Dendritic cell treated with granulocyte-macrophage colony-stimulating factor and Interleukin-4, amounts not matched to agents 40 ng/mL and 50 ng/mL, for 4 days (primary cell): ENCODE measurements at regions of chr9 and their contacts with region 1.

Region 1: DNA sequence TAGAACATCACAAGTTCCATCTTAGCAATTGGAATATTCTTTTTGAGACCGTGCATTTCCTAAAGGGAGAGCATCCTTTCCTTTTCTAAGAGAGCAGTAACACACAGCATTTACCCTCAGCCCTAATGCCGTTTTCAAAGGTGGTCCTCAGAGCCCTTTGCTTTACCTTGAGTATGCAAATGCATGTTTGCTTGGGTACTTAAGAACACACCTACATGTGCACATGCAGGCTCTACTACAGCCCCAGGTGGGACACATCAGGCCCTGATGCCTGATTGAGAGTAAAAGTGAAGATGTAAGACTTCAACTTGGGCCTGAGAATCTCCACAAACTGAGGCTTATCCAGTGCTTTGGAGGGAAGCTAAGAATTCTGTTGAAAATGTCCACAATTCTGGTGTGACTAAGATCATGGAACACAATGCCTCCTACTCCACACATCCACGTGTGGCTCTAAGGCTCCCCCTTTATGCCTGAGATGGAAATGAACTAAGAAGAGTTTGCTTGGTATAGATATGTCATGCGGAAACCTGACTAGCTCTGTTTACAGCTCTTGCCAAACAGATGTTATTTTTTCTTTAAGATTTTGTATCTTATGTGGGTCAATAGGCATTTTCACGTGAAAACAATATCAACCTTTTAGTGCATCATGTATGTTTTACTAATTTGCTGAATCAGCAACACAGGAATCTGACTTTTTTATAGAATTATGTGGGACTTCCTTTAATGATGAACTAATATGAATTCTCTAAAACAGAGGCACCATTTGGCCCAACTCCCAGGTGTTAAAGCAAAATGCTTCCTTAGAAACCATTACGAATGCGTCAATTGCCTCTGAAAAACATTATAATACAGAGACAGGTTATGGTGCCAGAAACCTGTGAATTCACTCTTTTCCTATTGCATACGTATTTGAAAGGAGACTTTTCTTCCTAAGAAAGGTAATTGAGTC is 48.9 kb upstream of the SLC2A8 start:
- H3K4me3 Mint-ChIP-seq: no peak overlapping the region
- H3K27ac Mint-ChIP-seq: no peak overlapping the region
- H3K4me1 Mint-ChIP-seq: no peaks in the 10 kb centered on the region
- H3K27me3 Mint-ChIP-seq: no peaks in the 10 kb centered on the region

Region 2: GRCh38 chr9:125785248-125785751 is 1562.8 kb before region 1 on chr9:
- intact Hi-C with region 1: no loop called
- H3K4me3 Mint-ChIP-seq: peak overlapping the region; percentile 59
- H3K27ac Mint-ChIP-seq: peak overlapping the region; percentile 89
- H3K4me1 Mint-ChIP-seq: peaks cover 52% of the 10 kb centered on the region
- H3K27me3 Mint-ChIP-seq: no peaks in the 10 kb centered on the region

Region 3: GRCh38 chr9:126947529-126947928 is 400.6 kb before region 1 on chr9:
- intact Hi-C with region 1: loop called (anchors 10 kb)
- H3K4me3 Mint-ChIP-seq: no peak overlapping the region
- H3K27ac Mint-ChIP-seq: no peak overlapping the region
- H3K4me1 Mint-ChIP-seq: peaks cover 15% of the 10 kb centered on the region
- H3K27me3 Mint-ChIP-seq: peaks cover 35% of the 10 kb centered on the region

Region 4: DNA sequence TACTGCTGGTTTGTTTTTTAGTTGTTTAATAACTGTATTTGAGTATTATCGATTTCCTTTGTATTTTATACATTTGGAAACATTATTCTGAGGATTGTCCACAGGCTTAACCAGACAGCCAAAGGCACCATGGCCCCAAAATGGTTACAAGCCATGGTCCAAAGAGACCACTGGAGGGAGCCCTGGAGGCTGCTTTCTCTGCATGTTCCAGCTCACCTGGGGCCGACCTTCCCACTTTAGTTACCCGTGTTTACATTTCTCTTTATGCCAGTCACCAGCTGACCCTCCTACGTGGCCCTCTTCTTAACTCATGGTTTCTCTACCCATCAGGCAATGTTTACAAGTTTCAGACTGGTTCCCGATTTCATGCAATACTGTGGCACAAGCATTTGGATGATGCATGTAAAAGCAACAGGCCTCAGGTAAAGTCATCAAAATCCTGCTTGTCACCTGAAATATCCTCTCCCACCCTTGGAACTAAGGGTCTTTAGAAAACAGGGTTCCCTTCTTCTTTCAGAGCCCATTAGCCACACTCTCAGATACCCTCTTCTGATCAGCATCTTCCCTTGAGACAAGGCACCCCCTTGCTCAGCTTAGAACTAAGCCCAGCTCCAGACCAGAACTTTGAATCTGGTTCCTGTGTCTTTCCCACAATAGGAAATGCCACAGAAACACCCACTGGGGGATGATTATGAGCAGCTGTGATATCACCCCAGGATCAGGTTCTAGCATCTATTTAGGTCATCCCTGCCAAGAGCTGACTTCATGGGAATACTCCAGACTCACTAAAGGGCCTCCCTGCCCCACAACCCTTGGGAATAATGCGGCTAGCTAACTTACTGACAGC is 133.5 kb before region 1 on chr9:
- intact Hi-C with region 1: loop called (anchors 5 kb)
- H3K4me3 Mint-ChIP-seq: no peak overlapping the region
- H3K27ac Mint-ChIP-seq: no peak overlapping the region
- H3K4me1 Mint-ChIP-seq: peaks cover 11% of the 10 kb centered on the region
- H3K27me3 Mint-ChIP-seq: peaks cover 22% of the 10 kb centered on the region

Region 5: DNA sequence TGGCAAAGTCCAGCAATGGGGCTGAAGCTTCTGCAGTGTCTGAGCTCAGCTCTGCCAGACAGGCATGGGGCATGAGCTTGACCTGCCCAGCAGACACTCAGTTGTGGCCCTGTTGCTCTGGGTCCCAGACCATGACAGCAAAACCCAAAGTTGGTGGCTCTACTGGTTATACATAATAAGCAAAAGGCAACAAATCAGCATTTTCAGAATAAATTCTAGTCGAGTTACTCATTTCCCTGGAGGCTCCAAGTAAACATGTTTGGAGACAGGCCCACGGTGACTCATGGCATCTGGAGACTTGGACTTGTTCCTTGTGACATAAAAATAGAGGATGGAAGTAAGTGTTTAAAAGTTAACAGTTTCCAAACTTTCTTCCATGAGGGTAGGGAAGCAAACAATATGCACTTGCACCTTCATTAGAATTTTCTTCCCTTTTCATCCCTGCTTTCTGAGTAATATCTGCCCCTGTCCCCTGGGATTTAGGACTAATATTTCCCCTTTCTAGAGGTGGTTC is 11.3 kb before region 1 on chr9:
- intact Hi-C with region 1: no loop called
- H3K4me3 Mint-ChIP-seq: no peak overlapping the region
- H3K27ac Mint-ChIP-seq: no peak overlapping the region
- H3K4me1 Mint-ChIP-seq: no peaks in the 10 kb centered on the region
- H3K27me3 Mint-ChIP-seq: peaks cover 4% of the 10 kb centered on the region